ENCODE measurements at regions of chr3 and their contacts with region 1.

Region 1: GRCh38 chr3:123652346-123652984 is 67.6 kb upstream of the HACD2 start:
- DNase-seq: no peak
- H3K4me3 ChIP-seq: no peak overlapping the region
- H3K27me3 ChIP-seq: no peaks in the 10 kb centered on the region
- CTCF ChIP-seq: peak; percentile 84

Region 2: DNA sequence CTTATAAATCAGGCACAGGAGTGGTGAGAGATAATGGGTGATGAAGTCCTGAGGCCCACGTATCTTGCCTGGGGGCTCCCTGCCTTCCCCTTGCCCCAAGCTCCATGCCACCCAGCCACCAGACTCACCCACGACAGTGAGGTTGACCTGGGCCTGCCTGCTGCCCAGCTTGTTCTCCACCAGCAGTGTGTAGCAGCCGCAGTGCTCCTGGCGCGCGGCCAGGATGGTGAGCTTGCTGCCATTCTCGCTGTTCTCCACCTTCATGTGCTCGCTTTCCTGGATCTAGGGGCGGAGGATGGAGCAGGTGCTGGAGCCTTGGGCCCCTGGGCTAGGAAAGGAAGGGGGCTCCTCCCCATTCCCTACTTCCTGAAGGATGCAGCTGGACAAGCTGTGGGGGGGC is 11.5 kb after region 1 on chr3:
- CTCF ChIA-PET with region 1: interaction called, 18 read pairs
- POLR2A ChIA-PET with region 1: no interaction called
- DNase-seq: no peak
- H3K4me3 ChIP-seq: no peak overlapping the region
- H3K27me3 ChIP-seq: no peaks in the 10 kb centered on the region
- CTCF ChIP-seq: no peak

Region 3: DNA sequence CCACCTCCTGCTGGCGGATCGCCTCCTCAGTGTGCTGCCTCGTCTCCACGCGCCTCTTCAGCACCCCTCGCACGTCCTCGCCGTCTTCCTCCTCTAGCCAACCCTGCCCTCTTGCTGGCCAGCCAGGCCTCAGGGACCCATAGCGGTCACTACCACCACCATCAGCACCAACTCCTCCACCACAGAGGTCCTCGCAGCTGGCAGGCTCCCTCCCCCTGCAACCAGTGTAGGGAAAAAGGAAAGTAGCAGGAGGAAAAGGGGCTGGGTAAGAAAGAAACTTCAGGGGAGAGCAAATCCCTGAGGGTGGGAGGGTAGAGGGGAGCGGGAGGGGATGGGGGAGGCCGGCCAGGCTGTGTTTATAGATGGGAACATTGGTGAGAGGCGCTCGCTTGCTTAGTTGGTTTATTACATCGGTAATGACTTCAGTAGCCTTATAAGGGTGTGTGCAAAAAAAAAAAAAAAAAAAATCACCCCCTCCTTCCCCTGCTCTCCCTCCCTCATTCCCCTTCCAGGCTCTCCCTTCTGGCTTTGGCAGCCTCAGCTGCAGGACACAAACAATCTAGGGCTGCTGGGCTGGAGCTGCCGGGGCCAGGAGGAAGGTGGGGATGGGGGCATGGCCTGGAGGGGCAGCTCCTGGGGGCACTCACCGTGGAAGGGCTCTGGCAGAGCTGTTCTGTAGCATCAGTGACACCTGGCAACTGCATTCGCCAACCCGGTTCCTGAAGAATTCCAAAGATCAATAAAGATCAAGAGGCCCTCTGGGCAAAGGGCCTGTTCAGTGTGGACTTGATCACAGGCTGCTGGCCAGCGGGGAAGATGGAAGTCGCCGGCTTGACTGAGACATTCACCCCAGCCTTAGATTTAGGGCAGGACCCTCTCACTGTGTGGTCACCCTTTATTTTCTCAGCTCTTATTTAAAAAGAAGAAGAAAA is 48.6 kb after region 1 on chr3:
- CTCF ChIA-PET with region 1: interaction called, 22 read pairs
- POLR2A ChIA-PET with region 1: no interaction called
- DNase-seq: no peak
- H3K4me3 ChIP-seq: no peak overlapping the region
- H3K27me3 ChIP-seq: no peaks in the 10 kb centered on the region
- CTCF ChIP-seq: no peak

Region 4: GRCh38 chr3:123723522-123724168 is 71.2 kb after region 1 on chr3:
- CTCF ChIA-PET with region 1: interaction called, 28 read pairs
- POLR2A ChIA-PET with region 1: interaction called, 3 read pairs
- DNase-seq: no peak
- H3K4me3 ChIP-seq: no peak overlapping the region
- H3K27me3 ChIP-seq: no peaks in the 10 kb centered on the region
- CTCF ChIP-seq: peak; percentile 84

Measured in BJ (cell line).